CD4-positive, alpha-beta T cell (primary cell): ENCODE measurements at regions of chr5 and their contacts with region 1.

Region 1: GRCh38 chr5:159156426-159157238 is 52.7 kb downstream of the RNF145 start:
- DNase-seq: peak in 9 of 14 experiments; percentile 5 to 87 (median 19)
- ATAC-seq: peak; percentile 80
- H3K4me3 ChIP-seq: no peak overlapping the region
- H3K4me3 Mint-ChIP-seq: no peak overlapping the region
- H3K27ac ChIP-seq: peak overlapping the region in 1 of 2 donors; percentile 2
- H3K27ac Mint-ChIP-seq: peak overlapping the region; percentile 88
- H3K4me1 ChIP-seq: peaks cover 8% of the 10 kb centered on the region
- H3K4me1 Mint-ChIP-seq: peaks cover 23% of the 10 kb centered on the region
- H3K27me3 ChIP-seq: no peaks in the 10 kb centered on the region
- H3K27me3 Mint-ChIP-seq: no peaks in the 10 kb centered on the region
- CTCF ChIP-seq: peak; percentile 92

Region 2: GRCh38 chr5:159262859-159263567 is 106.4 kb after region 1 on chr5 and contains the start of gene UBLCP1:
- CTCF ChIA-PET with region 1: interaction called, 6 read pairs
- POLR2A ChIA-PET with region 1: interaction called, 6 read pairs
- intact Hi-C with region 1: loop called in 1 of 2 experiments (anchors 1 kb)
- DNase-seq: peak; percentile 55 to 94 (median 70)
- ATAC-seq: peak; percentile 90
- H3K4me3 ChIP-seq: peak within 1 kb of the TSS; percentile 74
- H3K4me3 Mint-ChIP-seq: peak within 1 kb of the TSS; percentile 88
- H3K27ac ChIP-seq: peak within 1 kb of the TSS; percentile 90 to 94
- H3K27ac Mint-ChIP-seq: peak within 1 kb of the TSS; percentile 96
- H3K4me1 ChIP-seq: peaks cover 18% of the 10 kb centered on the region
- H3K4me1 Mint-ChIP-seq: peaks cover 53% of the 10 kb centered on the region
- H3K27me3 ChIP-seq: no peaks in the 10 kb centered on the region
- H3K27me3 Mint-ChIP-seq: no peaks in the 10 kb centered on the region
- CTCF ChIP-seq: no peak
- total RNA-seq, gene UBLCP1: 16.5 to 19.0 TPM

Region 3: GRCh38 chr5:159274676-159275075 is 118.0 kb after region 1 on chr5:
- CTCF ChIA-PET with region 1: interaction called, 9 read pairs
- POLR2A ChIA-PET with region 1: no interaction called
- intact Hi-C with region 1: loop called in 1 of 2 experiments (anchors 5 kb)
- DNase-seq: no peak
- ATAC-seq: no peak
- H3K4me3 ChIP-seq: no peak overlapping the region
- H3K4me3 Mint-ChIP-seq: no peak overlapping the region
- H3K27ac ChIP-seq: no peak overlapping the region
- H3K27ac Mint-ChIP-seq: no peak overlapping the region
- H3K4me1 ChIP-seq: no peaks in the 10 kb centered on the region
- H3K4me1 Mint-ChIP-seq: peaks cover 25% of the 10 kb centered on the region
- H3K27me3 ChIP-seq: no peaks in the 10 kb centered on the region
- H3K27me3 Mint-ChIP-seq: no peaks in the 10 kb centered on the region
- CTCF ChIP-seq: no peak

Region 4: DNA sequence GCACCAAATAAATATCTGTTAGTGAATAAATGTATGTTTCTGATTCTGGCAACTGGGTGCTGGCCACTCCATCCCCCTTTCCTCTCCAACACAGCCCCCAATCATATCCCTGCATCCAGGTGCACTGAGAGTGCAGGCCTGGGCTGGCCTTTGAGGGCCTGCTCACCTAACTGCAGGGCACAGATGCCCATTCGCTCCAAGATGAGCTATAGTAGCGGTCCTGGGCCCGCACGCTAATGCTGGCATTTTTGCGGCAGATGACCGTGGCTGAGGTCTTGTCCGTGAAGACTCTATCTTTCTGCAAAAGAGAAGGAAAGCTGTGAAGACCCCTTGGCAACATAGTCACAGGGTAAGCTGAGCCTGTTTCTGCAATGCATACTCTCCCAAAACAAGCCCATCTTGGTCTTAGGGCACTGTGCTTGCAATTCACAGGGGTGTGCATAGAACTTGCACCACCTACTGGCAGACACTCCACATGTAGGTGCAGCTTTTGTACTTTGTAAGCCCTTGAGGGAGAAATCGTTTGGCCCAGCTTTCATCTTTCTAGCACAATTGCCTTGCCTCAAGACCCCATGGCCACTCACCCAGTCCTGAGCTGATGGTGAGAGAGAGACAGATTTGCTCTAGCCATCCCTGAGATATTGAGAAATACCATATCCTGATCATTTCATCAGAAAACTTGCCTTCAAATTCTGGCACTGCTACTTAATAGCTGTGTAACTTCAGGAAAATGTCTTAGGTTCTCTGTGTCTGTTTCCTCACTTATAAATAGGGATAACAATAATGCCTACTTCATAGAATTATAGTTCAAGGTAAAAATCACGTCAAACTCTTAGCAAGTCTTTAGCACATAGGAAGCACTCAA is 160.1 kb after region 1 on chr5:
- CTCF ChIA-PET with region 1: interaction called, 33 read pairs
- POLR2A ChIA-PET with region 1: interaction called, 9 read pairs
- intact Hi-C with region 1: loop called (anchors 1 kb)
- DNase-seq: peak in 12 of 14 experiments; percentile 18 to 71 (median 24)
- ATAC-seq: peak; percentile 82
- H3K4me3 ChIP-seq: no peak overlapping the region
- H3K4me3 Mint-ChIP-seq: no peak overlapping the region
- H3K27ac ChIP-seq: no peak overlapping the region
- H3K27ac Mint-ChIP-seq: no peak overlapping the region
- H3K4me1 ChIP-seq: no peaks in the 10 kb centered on the region
- H3K4me1 Mint-ChIP-seq: no peaks in the 10 kb centered on the region
- H3K27me3 ChIP-seq: no peaks in the 10 kb centered on the region
- H3K27me3 Mint-ChIP-seq: peaks cover 6% of the 10 kb centered on the region
- CTCF ChIP-seq: peak; percentile 56

Region 5: GRCh38 chr5:159444441-159445082 is 287.9 kb after region 1 on chr5:
- CTCF ChIA-PET with region 1: no interaction called
- POLR2A ChIA-PET with region 1: no interaction called
- intact Hi-C with region 1: loop called in 1 of 2 experiments (anchors 10 kb)
- DNase-seq: peak in 3 of 14 experiments; percentile 53 to 65 (median 55)
- ATAC-seq: no peak
- H3K4me3 ChIP-seq: no peak overlapping the region
- H3K4me3 Mint-ChIP-seq: no peak overlapping the region
- H3K27ac ChIP-seq: no peak overlapping the region
- H3K27ac Mint-ChIP-seq: no peak overlapping the region
- H3K4me1 ChIP-seq: no peaks in the 10 kb centered on the region
- H3K4me1 Mint-ChIP-seq: no peaks in the 10 kb centered on the region
- H3K27me3 ChIP-seq: no peaks in the 10 kb centered on the region
- H3K27me3 Mint-ChIP-seq: no peaks in the 10 kb centered on the region
- CTCF ChIP-seq: peak; percentile 32

Region 6: DNA sequence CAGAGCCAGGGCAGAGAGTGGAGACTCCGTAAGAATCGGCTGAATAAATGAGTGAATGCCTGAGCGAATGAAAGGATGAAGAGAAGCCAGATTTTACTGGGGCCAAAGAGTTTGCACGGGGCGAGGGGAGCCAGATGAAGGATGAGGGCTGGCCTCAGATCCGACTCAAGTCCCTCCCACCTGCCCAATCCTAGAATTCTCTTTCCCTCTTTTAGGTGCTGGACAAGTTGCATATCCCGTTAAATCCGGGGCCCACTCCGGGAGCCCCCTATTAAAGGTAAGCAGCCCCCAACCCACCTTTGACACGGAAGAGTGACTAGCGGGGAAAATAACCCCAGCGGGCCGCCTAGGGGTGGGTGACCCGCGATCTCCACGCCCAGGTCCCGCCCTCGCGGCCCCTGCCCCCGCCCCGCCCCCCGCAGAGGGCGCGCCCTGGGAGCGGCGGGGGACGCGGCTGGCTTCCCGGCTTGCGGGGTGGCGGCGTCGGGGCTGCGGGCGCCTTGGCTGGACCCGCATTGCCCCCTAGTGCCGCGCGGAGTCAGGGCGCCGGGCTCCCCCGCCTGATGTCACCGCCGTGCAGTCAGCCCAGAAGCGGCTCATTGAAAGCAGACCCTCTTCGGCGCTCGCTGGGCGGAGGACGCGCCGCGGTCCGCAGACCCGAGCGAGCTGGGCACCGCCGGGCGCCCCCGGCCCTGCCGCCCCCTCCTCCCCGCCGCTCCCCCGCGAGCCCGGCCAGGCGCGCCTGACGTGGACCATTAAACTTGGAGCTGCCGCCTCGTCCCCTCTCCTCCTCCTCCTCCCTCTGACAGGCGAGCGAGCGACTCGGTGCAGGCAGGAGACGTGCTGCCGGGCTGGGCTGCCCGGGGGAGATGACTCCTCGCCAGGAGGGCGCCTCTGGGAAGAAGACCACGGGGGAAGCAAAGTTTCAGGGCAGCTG is 759.5 kb after region 1 on chr5 and contains the start of gene ADRA1B:
- CTCF ChIA-PET with region 1: no interaction called
- POLR2A ChIA-PET with region 1: no interaction called
- intact Hi-C with region 1: loop called in 1 of 2 experiments (anchors 10 kb)
- DNase-seq: peak in 12 of 14 experiments; percentile 6 to 64 (median 23)
- ATAC-seq: peak; percentile 67
- H3K4me3 ChIP-seq: no peak within 1 kb of the TSS
- H3K4me3 Mint-ChIP-seq: peak within 1 kb of the TSS; percentile 32
- H3K27ac ChIP-seq: no peak within 1 kb of the TSS
- H3K27ac Mint-ChIP-seq: no peak within 1 kb of the TSS
- H3K4me1 ChIP-seq: peaks cover 9% of the 10 kb centered on the region
- H3K4me1 Mint-ChIP-seq: peaks cover 10% of the 10 kb centered on the region
- H3K27me3 ChIP-seq: peaks cover 24 to 51% of the 10 kb centered on the region in 2 experiments
- H3K27me3 Mint-ChIP-seq: peaks cover 67% of the 10 kb centered on the region
- CTCF ChIP-seq: no peak
- total RNA-seq, gene ADRA1B: not detected

Region 7: DNA sequence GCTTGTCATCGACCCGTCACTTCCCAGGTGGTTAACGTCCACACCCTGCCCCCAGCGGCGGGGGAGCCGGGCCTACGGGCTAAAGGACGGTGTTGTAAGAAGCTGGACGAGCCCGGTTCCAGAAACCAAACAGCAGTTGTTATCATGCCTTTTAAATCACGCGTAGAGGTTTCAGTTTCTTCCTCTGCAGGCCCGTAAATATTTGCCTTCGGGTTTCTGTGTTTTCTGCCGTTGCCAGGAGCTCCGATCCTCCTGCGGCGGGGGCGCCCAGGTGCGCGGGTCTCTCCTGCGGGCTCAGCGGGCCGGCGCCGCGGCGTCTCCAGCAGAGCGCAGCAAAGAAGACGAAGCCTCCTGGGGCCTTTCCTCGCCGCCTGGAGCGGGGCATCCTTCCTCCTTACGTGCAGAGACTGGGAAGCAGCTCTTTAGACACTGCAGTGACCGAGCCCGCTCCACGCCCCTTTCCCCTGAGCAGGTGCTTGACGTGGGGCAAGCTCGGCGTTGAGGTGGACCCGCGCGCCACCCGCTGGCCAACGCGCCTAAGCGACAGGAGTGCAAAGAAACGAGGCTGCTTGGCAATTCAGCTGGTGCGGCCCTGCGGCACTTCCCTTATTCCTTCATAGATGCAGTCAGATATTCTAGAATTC is 830.5 kb after region 1 on chr5:
- CTCF ChIA-PET with region 1: interaction called, 3 read pairs
- POLR2A ChIA-PET with region 1: no interaction called
- intact Hi-C with region 1: loop called (anchors 1 to 5 kb)
- DNase-seq: peak; percentile 50 to 84 (median 70)
- ATAC-seq: peak; percentile 87
- H3K4me3 ChIP-seq: peak overlapping the region; percentile 47
- H3K4me3 Mint-ChIP-seq: peak overlapping the region; percentile 77
- H3K27ac ChIP-seq: no peak overlapping the region
- H3K27ac Mint-ChIP-seq: no peak overlapping the region
- H3K4me1 ChIP-seq: peaks cover 11% of the 10 kb centered on the region
- H3K4me1 Mint-ChIP-seq: no peaks in the 10 kb centered on the region
- H3K27me3 ChIP-seq: peaks cover 4 to 10% of the 10 kb centered on the region in 2 experiments
- H3K27me3 Mint-ChIP-seq: peaks cover 59% of the 10 kb centered on the region
- CTCF ChIP-seq: peak; percentile 69